ENCODE measurements at regions of chr9 and their contacts with region 1.

Region 1: DNA sequence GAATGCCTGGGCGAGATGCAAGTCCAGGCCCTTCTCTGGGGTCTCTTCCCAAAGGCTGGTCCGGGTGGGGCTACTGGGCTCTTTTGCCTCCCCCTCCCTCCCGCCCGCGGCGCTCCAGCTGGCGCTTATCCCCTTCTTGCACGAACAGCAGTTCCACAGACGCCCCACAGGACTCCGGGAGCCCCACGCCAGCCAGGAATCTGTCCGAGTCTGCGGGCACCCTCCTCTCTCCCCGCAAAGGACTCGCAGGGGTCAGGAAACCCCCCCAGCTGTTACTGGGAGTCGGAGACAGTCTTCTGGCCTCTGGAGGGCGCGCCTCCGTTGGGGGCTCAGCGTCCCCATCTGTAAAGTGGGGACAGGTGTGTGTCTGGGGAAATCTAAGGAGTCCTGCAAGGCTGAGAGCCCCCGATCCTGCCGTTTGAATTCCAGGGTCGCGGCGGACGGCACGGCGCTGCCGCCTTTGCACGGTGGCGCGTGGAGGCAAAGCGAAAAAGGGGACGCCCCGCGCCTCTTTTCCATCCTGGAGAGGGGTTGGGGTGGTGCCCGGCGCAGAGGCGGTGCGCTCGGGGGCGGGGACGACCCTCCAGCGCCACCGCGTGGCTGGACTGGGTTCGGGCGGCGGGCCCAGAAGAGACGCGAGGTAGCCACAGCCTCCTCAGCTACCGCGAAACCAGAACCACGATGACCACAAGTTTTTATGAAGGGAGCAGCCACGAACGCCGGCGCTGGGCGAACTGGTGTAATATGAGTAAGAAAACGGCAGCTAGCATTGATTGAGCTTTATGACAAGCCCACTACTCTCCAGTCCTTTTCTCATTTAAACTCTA is 2.9 kb upstream of the CCIN start:
- DNase-seq: peak; percentile 79 to 89
- H3K4me3 ChIP-seq: peak overlapping the region; percentile 54 to 56
- H3K27ac ChIP-seq: peak overlapping the region; percentile 56 to 77
- H3K4me1 ChIP-seq: peaks cover 4 to 50% (median 41%) of the 10 kb centered on the region in 4 donors
- H3K27me3 ChIP-seq: no peaks in the 10 kb centered on the region
- CTCF ChIP-seq: peak; percentile 93 to 94

Region 2: GRCh38 chr9:36036780-36037548 is 129.3 kb before region 1 on chr9 and contains the start of gene RECK:
- intact Hi-C with region 1: loop called (anchors 10 kb)
- DNase-seq: peak; percentile 92 to 96
- H3K4me3 ChIP-seq: peak within 1 kb of the TSS; percentile 96 to 97
- H3K27ac ChIP-seq: peak within 1 kb of the TSS; percentile 80 to 88
- H3K4me1 ChIP-seq: peaks cover 0 to 39% (median 18%) of the 10 kb centered on the region in 4 donors
- H3K27me3 ChIP-seq: no peaks in the 10 kb centered on the region
- CTCF ChIP-seq: no peak

Region 3: DNA sequence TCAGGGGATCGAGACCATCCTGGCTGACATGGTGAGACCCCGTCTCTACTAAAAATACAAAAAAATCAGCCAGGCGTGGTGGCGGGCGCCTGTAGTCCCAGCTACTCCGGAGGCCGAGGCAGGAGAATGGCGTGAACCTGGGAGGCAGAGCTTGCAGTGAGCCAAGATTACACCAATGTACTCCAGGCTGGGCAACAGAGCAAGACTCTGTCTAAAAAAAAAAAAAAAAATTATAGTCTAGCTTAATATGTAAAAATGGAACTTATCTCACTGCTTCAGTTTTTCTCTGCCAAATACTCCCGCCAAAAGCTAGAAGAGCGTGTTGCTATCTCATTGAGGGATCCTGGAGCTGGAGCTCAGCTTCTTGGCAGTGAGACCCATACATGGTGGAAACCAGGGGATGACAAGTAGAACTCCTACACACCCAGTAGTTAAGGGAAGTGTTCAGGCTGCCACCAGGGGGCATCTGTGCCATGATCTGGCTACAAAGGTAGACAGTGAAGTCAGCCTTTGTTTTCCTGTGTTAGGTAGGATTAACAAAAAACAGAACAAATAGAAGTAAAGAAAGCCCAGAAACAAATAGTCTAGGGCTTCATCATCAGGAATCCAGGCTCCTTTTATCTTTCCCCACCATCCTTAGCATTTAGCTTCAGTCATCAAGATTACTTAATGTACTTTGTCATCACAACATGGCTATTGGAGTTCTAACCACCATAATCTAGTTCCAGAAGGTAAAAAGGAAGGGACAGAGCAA is 63.4 kb before region 1 on chr9:
- intact Hi-C with region 1: loop called (anchors 2 kb)
- DNase-seq: peak; percentile 75 to 88
- H3K4me3 ChIP-seq: no peak overlapping the region
- H3K27ac ChIP-seq: peak overlapping the region in 1 of 2 donors; percentile 25
- H3K4me1 ChIP-seq: no peaks in the 10 kb centered on the region
- H3K27me3 ChIP-seq: no peaks in the 10 kb centered on the region
- CTCF ChIP-seq: peak; percentile 78 to 84

Region 4: GRCh38 chr9:36141288-36141687 is 25.0 kb before region 1 on chr9:
- intact Hi-C with region 1: loop called (anchors 2 kb)
- DNase-seq: no peak
- H3K4me3 ChIP-seq: no peak overlapping the region
- H3K27ac ChIP-seq: peak overlapping the region; percentile 88 to 94
- H3K4me1 ChIP-seq: peaks cover 0 to 63% (median 32%) of the 10 kb centered on the region in 4 donors
- H3K27me3 ChIP-seq: no peaks in the 10 kb centered on the region
- CTCF ChIP-seq: peak; percentile 23 to 36

Region 5: GRCh38 chr9:36470643-36471290 is 304.5 kb after region 1 on chr9:
- intact Hi-C with region 1: no loop called
- DNase-seq: peak; percentile 60 to 66
- H3K4me3 ChIP-seq: peak overlapping the region; percentile 24 to 46
- H3K27ac ChIP-seq: peak overlapping the region; percentile 70
- H3K4me1 ChIP-seq: peaks cover 0 to 17% (median 12%) of the 10 kb centered on the region in 4 donors
- H3K27me3 ChIP-seq: no peaks in the 10 kb centered on the region
- CTCF ChIP-seq: no peak